Dorsolateral prefrontal cortex (tissue), 120 donors: ENCODE measurements at regions of chr16 and their contacts with region 1.

Region 1: DNA sequence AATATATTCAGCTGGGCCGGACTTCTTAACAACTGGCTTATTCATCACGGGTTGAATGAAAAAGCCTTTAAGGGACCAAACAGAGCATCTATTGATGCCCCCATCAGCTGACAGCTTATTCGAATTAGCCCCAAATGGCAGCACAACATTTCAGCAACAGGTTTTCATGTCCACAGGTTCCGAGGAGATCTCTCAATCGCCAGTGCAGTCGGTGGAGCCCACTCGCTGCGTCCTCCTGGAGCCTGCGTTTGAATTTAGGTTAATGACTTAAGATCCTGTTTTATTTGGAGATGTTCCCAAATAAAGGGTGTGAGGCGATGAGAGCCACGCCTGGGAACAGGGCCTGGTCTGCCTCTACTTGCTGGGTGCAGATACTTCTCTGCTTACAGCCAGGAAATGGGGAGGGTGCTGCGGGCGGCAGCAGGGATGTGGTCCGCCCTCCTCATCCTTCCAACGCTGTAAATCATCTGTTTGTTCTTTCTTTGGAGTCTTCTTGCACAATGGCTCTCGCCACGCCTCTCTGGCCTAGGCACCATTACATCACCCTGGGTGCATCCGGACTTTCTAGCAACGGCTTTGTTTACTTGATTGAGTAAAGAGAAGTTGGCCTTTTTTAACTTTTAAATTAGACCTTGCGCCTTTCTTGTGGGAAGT is 22.6 kb downstream of the NDE1 start:
- DNase-seq: peak; percentile 7 to 91 (median 78)
- H3K4me3 ChIP-seq: peak overlapping the region in 54 of 59 donors; percentile 4 to 55 (median 28)
- H3K27ac ChIP-seq: peak overlapping the region; percentile 81 to 100 (median 98)
- H3K27me3 ChIP-seq: no peaks in the 10 kb centered on the region
- CTCF ChIP-seq: peak in 8 of 56 donors; percentile 7 to 32 (median 12)

Region 2: DNA sequence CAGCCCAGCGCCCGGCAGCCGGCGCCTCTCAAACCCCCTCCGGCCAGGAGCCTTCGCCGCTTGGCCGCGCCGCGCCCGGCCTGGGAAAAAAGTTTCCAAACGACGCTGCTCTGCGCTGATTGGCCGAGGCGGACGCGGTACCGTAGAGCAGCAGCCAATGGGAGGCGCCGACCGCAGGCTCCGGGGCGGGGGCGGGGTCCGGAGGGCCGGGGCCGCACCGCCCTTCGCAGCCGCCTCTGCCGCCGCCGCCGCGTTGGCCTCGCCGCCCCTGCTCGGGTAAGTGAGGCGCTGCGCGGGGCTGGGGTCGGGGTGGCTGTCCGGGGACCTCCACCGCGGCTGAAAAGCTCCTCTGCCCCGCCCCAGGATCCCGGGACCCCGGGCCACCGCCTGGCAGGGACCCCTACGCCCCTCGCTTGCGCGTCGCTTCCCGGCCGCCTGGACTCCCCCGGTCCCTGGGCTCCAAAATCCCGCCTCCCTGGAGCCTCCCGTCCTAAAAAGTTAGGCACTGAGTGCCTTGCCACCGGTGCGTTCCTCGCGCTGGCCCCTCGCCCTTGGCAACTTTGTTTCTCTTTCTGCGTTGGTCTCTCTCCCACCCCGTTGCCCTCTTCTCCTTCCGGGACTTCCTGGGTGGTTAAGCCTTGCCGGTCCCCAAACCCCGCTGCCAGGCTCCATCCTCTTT is 22.5 kb before region 1 on chr16 and contains the start of gene NDE1:
- intact Hi-C with region 1: loop called in 1 of 2 experiments (anchors 2 kb)
- DNase-seq: peak; percentile 82 to 94 (median 90)
- H3K4me3 ChIP-seq: peak within 1 kb of the TSS; percentile 70 to 99 (median 89)
- H3K27ac ChIP-seq: peak within 1 kb of the TSS; percentile 29 to 95 (median 90)
- H3K27me3 ChIP-seq: no peaks in the 10 kb centered on the region
- CTCF ChIP-seq: peak in 40 of 56 donors; percentile 9 to 53 (median 32)
- total RNA-seq, gene NDE1: 12.7 to 127 (median 41.9) TPM

Region 3: GRCh38 chr16:15726715-15727114 is 54.1 kb after region 1 on chr16:
- intact Hi-C with region 1: no loop called
- DNase-seq: no peak
- H3K4me3 ChIP-seq: no peak overlapping the region
- H3K27ac ChIP-seq: no peak overlapping the region
- H3K27me3 ChIP-seq: no peaks in the 10 kb centered on the region
- CTCF ChIP-seq: no peak